ENCODE measurements at regions of chr4 and their contacts with region 1.

Region 1: GRCh38 chr4:1746265-1746691 is 25.0 kb downstream of the TACC3 start:
- DNase-seq: peak; percentile 88
- ATAC-seq: peak; percentile 75
- H3K4me3 Mint-ChIP-seq: no peak overlapping the region
- H3K27ac Mint-ChIP-seq: no peak overlapping the region
- H3K4me1 Mint-ChIP-seq: no peaks in the 10 kb centered on the region
- H3K27me3 Mint-ChIP-seq: no peaks in the 10 kb centered on the region

Region 2: GRCh38 chr4:1596393-1596792 is 149.9 kb before region 1 on chr4:
- CTCF ChIA-PET with region 1: no interaction called
- DNase-seq: no peak
- ATAC-seq: no peak
- H3K4me3 Mint-ChIP-seq: no peak overlapping the region
- H3K27ac Mint-ChIP-seq: no peak overlapping the region
- H3K4me1 Mint-ChIP-seq: no peaks in the 10 kb centered on the region
- H3K27me3 Mint-ChIP-seq: no peaks in the 10 kb centered on the region

Region 3: DNA sequence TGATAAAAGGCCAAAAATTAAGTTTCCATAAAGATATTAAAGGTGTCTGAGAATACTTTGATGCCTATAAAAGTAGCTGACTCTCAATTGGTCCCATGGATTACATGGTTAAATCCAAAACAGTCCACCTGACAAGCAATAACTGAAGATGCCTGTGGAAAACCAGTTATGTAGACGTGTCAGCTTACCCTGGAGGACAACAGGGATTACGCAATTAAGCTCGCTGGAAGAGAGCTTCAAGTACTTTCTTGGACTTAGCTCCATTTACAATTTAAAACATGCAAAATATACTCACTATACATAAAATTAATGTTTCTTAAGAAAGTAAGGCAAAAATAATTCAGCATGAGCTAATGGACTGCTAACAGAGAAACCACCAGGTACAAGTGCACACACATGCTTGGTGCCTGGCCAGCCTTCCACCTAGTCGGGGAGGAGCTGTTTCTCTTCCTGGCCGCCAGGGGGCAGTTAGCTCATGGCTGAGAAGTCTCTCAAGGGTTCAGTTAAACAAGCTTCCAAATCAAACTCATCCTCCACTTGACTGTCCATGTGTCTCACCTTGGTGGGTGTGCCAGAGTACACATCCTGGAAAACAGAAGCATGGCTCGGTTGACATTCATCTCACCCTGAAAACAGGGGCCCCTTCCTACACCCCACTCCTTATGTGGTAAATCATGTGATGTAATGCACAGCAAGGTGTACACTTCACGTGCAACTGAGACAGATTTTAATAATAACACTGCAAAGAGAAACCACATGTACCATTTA is 53.0 kb before region 1 on chr4:
- CTCF ChIA-PET with region 1: interaction called, 22 read pairs
- DNase-seq: peak; percentile 82
- ATAC-seq: peak; percentile 93
- H3K4me3 Mint-ChIP-seq: no peak overlapping the region
- H3K27ac Mint-ChIP-seq: peak overlapping the region; percentile 74
- H3K4me1 Mint-ChIP-seq: peaks cover 4% of the 10 kb centered on the region
- H3K27me3 Mint-ChIP-seq: no peaks in the 10 kb centered on the region

Region 4: GRCh38 chr4:1705732-1706131 is 40.5 kb before region 1 on chr4:
- CTCF ChIA-PET with region 1: no interaction called
- DNase-seq: no peak
- ATAC-seq: no peak
- H3K4me3 Mint-ChIP-seq: no peak overlapping the region
- H3K27ac Mint-ChIP-seq: no peak overlapping the region
- H3K4me1 Mint-ChIP-seq: peaks cover 70% of the 10 kb centered on the region
- H3K27me3 Mint-ChIP-seq: no peaks in the 10 kb centered on the region

Region 5: GRCh38 chr4:1721004-1721665 is 25.1 kb before region 1 on chr4 and contains the starts of genes TACC3 and TMEM129:
- CTCF ChIA-PET with region 1: interaction called, 15 read pairs
- DNase-seq: peak; percentile 97
- ATAC-seq: peak; percentile 84
- H3K4me3 Mint-ChIP-seq: peak within 1 kb of the TSS; percentile 99
- H3K27ac Mint-ChIP-seq: peak within 1 kb of the TSS; percentile 98
- H3K4me1 Mint-ChIP-seq: peaks cover 52% of the 10 kb centered on the region
- H3K27me3 Mint-ChIP-seq: no peaks in the 10 kb centered on the region
- total RNA-seq, gene TACC3: 246 to 315 TPM
- total RNA-seq, gene TMEM129: 22.5 to 24.7 TPM

Region 6: DNA sequence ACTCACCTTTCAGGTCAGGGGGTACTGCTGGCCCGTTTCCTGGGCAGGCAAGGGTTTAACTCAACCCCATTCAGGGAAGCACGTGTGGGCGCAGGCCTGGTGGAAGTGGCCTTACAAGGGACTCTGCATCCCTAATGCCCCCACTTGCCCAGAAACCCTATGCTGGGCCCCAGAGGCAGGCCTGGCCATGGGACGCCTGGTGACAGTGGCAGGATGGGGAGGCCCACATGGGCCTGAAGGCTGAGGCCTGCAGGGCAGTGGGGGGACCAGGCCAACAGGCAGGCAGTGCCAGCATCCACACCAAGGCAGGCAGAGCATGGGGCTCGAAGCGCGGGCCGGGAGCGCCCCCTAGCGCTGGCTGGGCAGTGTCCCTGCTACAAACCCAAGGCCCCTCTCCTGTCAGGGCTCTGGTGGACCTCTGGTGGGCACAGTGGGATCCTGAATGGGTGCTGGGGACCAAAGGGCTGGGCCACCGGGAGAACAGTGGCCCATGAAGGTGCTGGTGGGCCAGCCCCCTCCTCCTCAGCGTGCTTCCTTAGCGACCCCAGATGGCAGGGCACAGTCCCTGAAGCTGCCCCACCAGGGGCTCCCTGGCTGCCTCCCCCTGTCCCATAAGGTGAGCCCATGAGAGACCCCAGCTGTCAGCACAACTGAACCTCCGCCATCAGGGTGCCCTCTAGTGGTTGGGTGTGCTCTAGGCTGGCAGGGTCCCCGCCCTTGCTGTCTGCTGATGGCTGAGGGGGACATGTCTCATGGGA is 63.7 kb after region 1 on chr4:
- CTCF ChIA-PET with region 1: interaction called, 86 read pairs
- DNase-seq: peak; percentile 77
- ATAC-seq: peak; percentile 88
- H3K4me3 Mint-ChIP-seq: no peak overlapping the region
- H3K27ac Mint-ChIP-seq: no peak overlapping the region
- H3K4me1 Mint-ChIP-seq: no peaks in the 10 kb centered on the region
- H3K27me3 Mint-ChIP-seq: no peaks in the 10 kb centered on the region

Region 7: GRCh38 chr4:1910643-1911042 is 164.4 kb after region 1 on chr4:
- CTCF ChIA-PET with region 1: interaction called, 12 read pairs
- DNase-seq: no peak
- ATAC-seq: no peak
- H3K4me3 Mint-ChIP-seq: no peak overlapping the region
- H3K27ac Mint-ChIP-seq: peak overlapping the region; percentile 44
- H3K4me1 Mint-ChIP-seq: peaks cover 44% of the 10 kb centered on the region
- H3K27me3 Mint-ChIP-seq: no peaks in the 10 kb centered on the region